ENCODE measurements at regions of chr18 and their contacts with region 1.

Region 1: GRCh38 chr18:44917216-44918141 is 236.8 kb downstream of the SETBP1 start:
- DNase-seq: no peak
- ATAC-seq: peak; percentile 37
- H3K4me3 ChIP-seq: no peak overlapping the region
- H3K27ac ChIP-seq: peak overlapping the region; percentile 84 to 98
- H3K4me1 ChIP-seq: peaks cover 3 to 10% of the 10 kb centered on the region in 2 donors
- H3K27me3 ChIP-seq: no peaks in the 10 kb centered on the region

Region 2: DNA sequence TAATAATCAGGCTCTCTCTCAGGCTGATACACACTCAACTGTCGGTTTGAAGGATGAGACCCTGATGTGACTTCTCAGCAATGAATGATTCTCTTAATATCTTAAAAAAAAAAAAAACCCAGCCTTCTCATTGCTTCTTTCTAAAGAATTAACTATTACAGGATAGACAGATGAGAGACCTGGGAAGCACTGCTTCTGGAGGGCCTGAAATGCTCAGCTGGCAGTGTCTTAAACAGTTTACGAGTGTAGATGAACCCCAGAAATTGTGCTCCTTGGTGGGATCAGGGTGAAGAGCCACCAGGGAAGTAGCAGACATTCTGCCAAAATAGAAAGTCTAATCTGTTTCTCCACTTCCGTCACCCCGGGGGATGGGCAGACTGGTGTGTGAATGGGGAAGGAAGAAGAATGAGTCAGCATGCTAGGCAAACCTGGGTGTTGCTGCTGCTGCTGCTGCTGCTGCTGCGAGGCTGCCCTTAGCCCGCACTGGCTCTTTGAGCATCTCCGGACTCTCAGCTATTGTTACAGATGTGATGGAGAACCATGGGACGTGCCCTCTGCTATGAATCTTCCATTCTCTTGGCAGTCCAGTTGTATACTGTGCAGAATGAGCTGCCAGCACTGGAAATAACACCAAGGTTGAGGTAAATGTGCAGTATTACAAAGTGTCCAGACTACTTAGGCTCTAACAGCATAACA is 78.4 kb before region 1 on chr18:
- intact Hi-C with region 1: loop called in 1 of 2 experiments (anchors 5 kb)
- DNase-seq: peak; percentile 88 to 90
- ATAC-seq: peak; percentile 80
- H3K4me3 ChIP-seq: no peak overlapping the region
- H3K27ac ChIP-seq: peak overlapping the region in 1 of 2 donors; percentile 12
- H3K4me1 ChIP-seq: peaks cover 0 to 4% of the 10 kb centered on the region in 2 donors
- H3K27me3 ChIP-seq: no peaks in the 10 kb centered on the region

Region 3: GRCh38 chr18:44901283-44901682 is 16.2 kb before region 1 on chr18:
- intact Hi-C with region 1: no loop called
- DNase-seq: no peak
- ATAC-seq: no peak
- H3K4me3 ChIP-seq: no peak overlapping the region
- H3K27ac ChIP-seq: no peak overlapping the region
- H3K4me1 ChIP-seq: no peaks in the 10 kb centered on the region
- H3K27me3 ChIP-seq: no peaks in the 10 kb centered on the region

Region 4: DNA sequence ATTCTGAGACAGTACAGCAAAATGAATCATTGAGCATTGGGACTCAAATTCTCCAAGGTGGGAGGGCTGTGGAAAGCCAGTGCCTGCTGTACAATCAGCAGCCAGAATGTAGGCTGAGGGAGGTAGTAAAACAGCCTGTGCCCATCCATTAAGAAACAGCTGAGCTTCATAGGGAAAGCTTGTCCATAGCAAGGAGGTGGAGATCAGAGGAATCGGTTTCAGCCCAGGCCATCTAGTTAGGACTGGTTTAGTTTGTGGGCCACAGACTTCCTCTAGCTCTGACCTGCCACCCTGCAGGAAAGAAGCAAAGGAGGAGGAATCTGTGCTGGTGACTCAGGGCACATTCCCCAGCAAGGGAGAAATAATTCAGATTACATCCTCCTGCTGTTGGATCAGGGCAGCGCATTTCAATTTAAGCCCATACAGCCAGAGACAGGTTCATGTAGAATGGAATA is 96.6 kb after region 1 on chr18:
- intact Hi-C with region 1: loop called in 1 of 2 experiments (anchors 5 kb)
- DNase-seq: peak in 1 of 2 donors; percentile 62
- ATAC-seq: peak; percentile 36
- H3K4me3 ChIP-seq: no peak overlapping the region
- H3K27ac ChIP-seq: peak overlapping the region in 1 of 2 donors; percentile 68
- H3K4me1 ChIP-seq: peaks cover 0 to 8% of the 10 kb centered on the region in 2 donors
- H3K27me3 ChIP-seq: no peaks in the 10 kb centered on the region

Region 5: GRCh38 chr18:45119876-45120275 is 202.4 kb after region 1 on chr18:
- intact Hi-C with region 1: no loop called
- DNase-seq: no peak
- ATAC-seq: no peak
- H3K4me3 ChIP-seq: no peak overlapping the region
- H3K27ac ChIP-seq: no peak overlapping the region
- H3K4me1 ChIP-seq: no peaks in the 10 kb centered on the region
- H3K27me3 ChIP-seq: no peaks in the 10 kb centered on the region

Measured in aorta (tissue), 5 donors.